H1 (cell line): ENCODE measurements at regions of chr1 and their contacts with region 1.

Region 1: GRCh38 chr1:36258962-36259349 is 34.7 kb downstream of the THRAP3 start:
- DNase-seq: no peak
- H3K4me3 ChIP-seq: no peak overlapping the region
- H3K27ac ChIP-seq: no peak overlapping the region
- H3K4me1 ChIP-seq: peaks cover 0 to 6% (median 2%) of the 10 kb centered on the region in 4 experiments; a peak in 2 of 7 replicates
- H3K27me3 ChIP-seq: no peaks in the 10 kb centered on the region
- CTCF ChIP-seq: no peak
- EP300 ChIP-seq: no peak
- POLR2A ChIP-seq: no peak
- RAD21 ChIP-seq: no peak

Region 2: GRCh38 chr1:36239941-36240637 is 18.9 kb before region 1 on chr1:
- CTCF ChIA-PET with region 1: interaction called, 10 read pairs
- POLR2A ChIA-PET with region 1: interaction called, 24 read pairs
- DNase-seq: no peak
- H3K4me3 ChIP-seq: no peak overlapping the region
- H3K27ac ChIP-seq: no peak overlapping the region
- H3K4me1 ChIP-seq: no peaks in the 10 kb centered on the region; a peak in 1 of 7 replicates
- H3K27me3 ChIP-seq: no peaks in the 10 kb centered on the region
- CTCF ChIP-seq: no peak
- EP300 ChIP-seq: no peak
- POLR2A ChIP-seq: no peak
- RAD21 ChIP-seq: no peak